Colonic mucosa (tissue), 4 donors: ENCODE measurements at regions of chr19 and their contacts with region 1.

Region 1: DNA sequence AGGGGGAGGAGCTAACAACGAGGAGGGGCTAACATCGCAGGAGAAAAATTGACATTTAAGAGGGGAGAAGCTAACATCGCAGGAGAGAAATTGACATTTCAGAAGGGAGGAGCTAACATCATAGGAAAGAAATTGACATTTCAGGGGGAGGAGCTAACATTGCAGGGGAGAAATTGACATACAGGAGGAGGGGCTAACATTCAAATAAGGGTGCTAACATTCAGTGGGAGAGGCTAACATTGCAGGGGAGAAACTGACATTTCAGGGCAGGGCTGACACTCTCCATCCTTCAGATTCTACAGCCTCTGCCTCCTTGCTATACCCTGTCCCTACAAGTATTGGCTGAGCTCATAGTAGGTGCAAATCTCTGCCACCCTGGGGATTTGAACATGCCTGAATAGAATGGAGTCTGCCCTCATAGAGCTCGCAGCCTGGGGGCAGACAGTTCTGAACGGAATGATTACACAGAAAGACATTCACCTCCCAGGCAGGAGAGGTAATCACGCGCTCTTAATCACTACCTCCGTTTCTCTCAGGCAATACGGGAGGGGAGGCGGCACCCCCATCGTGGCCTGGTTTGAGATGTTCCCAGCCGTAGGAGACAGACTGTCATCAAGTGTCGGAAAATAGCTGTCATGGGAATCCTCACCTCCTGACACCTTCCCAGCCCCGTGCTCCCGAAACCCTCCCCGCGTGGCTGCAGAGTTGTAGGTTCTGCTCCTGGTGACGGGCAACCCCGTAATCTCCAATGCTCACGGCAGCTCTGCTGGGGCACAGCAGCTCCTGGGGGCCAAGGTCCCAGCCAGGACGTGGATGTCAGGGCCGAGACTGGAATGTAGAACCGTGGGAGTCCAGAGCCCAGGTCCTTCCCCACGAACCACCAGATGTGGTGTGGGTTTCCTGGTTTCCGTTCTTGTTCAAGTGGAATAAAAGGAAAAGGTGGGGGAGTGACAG is 9.5 kb downstream of the GPR32 start:
- DNase-seq: no peak
- H3K4me3 ChIP-seq: no peak overlapping the region
- H3K27ac ChIP-seq: no peak overlapping the region
- H3K4me1 ChIP-seq: no peaks in the 10 kb centered on the region
- H3K27me3 ChIP-seq: peaks cover 13% of the 10 kb centered on the region
- CTCF ChIP-seq: no peak

Region 2: DNA sequence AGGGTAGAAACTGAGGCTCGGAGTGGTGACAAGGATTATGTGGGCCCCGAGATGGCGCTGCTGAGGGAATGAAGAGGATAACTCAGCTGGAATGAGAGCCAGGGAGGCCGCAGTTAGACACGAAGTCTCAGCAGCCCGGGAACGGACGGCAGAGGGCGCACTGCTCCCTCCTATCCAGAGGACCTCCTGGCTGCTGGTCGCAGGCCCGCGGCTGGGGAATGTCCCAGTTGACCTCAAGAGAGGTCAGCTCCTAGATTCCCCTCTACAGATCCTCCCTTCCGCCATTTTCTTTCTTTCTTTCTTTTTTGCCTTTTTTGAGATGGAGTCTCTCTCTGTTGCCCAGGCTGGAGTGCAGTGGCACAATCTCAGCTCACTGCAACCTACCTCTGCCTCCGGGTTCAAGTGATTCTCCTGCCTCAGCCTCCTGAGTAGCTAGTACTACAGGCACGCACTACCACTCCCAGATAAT is 242.0 kb before region 1 on chr19:
- intact Hi-C with region 1: loop called (anchors 5 kb)
- DNase-seq: peak; percentile 81
- H3K4me3 ChIP-seq: no peak overlapping the region
- H3K27ac ChIP-seq: no peak overlapping the region
- H3K4me1 ChIP-seq: no peaks in the 10 kb centered on the region
- H3K27me3 ChIP-seq: no peaks in the 10 kb centered on the region
- CTCF ChIP-seq: peak; percentile 67

Region 3: GRCh38 chr19:50705422-50706019 is 74.3 kb before region 1 on chr19:
- intact Hi-C with region 1: loop called (anchors 5 kb)
- DNase-seq: no peak
- H3K4me3 ChIP-seq: no peak overlapping the region
- H3K27ac ChIP-seq: no peak overlapping the region
- H3K4me1 ChIP-seq: no peaks in the 10 kb centered on the region
- H3K27me3 ChIP-seq: no peaks in the 10 kb centered on the region
- CTCF ChIP-seq: peak; percentile 28

Region 4: GRCh38 chr19:51097166-51097738 is 317.5 kb after region 1 on chr19:
- intact Hi-C with region 1: no loop called
- DNase-seq: peak; percentile 62
- H3K4me3 ChIP-seq: no peak overlapping the region
- H3K27ac ChIP-seq: no peak overlapping the region
- H3K4me1 ChIP-seq: no peaks in the 10 kb centered on the region
- H3K27me3 ChIP-seq: no peaks in the 10 kb centered on the region
- CTCF ChIP-seq: peak; percentile 15

Region 5: GRCh38 chr19:51219307-51219706 is 439.5 kb after region 1 on chr19:
- intact Hi-C with region 1: no loop called
- DNase-seq: no peak
- H3K4me3 ChIP-seq: no peak overlapping the region
- H3K27ac ChIP-seq: no peak overlapping the region
- H3K4me1 ChIP-seq: no peaks in the 10 kb centered on the region
- H3K27me3 ChIP-seq: no peaks in the 10 kb centered on the region
- CTCF ChIP-seq: no peak